Heart left ventricle (tissue), 16 donors: ENCODE measurements at regions of chr10 and their contacts with region 1.

Region 1: GRCh38 chr10:54396004-54396403 is 405.0 kb downstream of the PCDH15 start:
- DNase-seq: no peak
- ATAC-seq: no peak
- H3K4me3 ChIP-seq: no peak overlapping the region
- H3K27ac ChIP-seq: no peak overlapping the region
- H3K4me1 ChIP-seq: no peaks in the 10 kb centered on the region
- H3K27me3 ChIP-seq: no peaks in the 10 kb centered on the region
- CTCF ChIP-seq: no peak
- POLR2A ChIP-seq: no peak

Region 2: DNA sequence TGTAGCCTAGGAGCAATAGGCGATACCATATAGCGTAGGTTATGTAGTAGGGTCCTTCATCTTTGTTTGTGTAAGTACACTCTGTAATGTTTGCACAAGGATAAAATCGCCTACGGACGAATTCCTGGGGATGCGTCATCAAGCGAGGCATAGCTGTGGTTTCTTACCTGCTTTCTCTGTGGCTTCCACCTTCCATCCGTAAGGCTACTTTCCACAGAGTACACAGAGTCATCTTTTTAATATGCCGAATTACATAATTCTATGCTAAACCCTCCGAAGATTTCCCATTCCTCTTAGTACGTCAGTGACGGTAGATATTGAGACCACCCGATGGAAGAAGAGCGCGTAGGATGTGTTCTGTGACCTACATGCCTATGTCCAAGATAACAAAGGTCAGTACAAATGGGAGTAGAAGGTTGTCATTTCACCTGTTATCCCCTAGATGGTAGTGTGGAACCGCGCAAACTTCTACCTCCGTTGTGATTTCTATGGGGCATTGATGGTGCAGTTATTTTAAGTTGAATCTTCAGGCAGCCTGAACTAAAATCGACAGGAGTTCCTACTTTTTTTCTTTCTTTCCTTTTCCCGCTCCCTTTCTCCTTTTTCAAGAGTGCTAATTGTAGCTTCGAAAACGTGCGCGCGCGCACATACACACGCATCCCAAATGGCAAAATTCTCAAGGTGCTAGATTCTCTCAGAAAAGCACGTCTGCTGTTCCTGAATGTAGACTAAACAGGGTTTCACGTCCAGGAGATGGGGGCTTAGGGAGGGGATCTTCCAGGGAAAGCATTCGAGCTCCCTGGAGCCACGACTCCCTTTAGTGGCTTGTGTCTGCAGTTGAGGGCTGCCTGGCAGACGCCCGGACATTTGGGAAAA is 1511.8 kb before region 1 on chr10:
- intact Hi-C with region 1: loop called in 1 of 10 experiments (anchors 10 kb)
- DNase-seq: peak in 1 of 5 donors; percentile 23
- ATAC-seq: peak; percentile 75 to 89 (median 84)
- H3K4me3 ChIP-seq: no peak overlapping the region
- H3K27ac ChIP-seq: no peak overlapping the region
- H3K4me1 ChIP-seq: peaks cover 0 to 7% (median 0%) of the 10 kb centered on the region in 12 donors
- H3K27me3 ChIP-seq: no peaks in the 10 kb centered on the region
- CTCF ChIP-seq: peak; percentile 46 to 77 (median 64)
- POLR2A ChIP-seq: no peak